CD8-positive, alpha-beta T cell (primary cell): ENCODE measurements at regions of chr11 and their contacts with region 1.

Region 1: DNA sequence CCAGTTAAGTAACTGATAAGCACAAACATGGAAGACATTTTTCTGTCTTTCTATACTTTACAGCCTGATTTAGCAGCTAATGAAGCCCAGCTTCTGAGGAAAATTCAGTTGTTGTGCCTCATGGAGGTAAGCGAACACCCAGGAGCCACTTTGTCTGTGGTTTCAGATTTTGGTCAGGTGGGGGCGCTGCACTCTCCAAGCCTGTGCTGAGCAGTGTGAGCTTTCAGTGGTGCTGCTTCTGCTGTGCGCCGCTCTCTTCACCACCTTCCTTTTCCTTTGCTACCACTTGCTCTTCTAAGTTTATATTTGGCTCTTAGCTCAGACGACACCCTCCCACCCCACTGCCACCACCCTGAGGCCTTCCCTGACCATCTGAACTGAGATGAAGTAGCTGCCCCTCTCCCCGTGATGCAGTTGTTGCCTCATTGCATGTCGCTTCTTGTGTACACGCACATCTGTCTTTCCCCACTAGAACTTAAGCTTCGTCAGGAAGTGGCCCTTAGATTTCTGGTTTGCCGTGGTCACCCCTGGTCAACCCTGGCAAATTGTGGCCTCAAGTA is 14.0 kb downstream of the PSMD13 start:
- DNase-seq: peak; percentile 75 to 89 (median 85)
- ATAC-seq: peak; percentile 99
- H3K4me3 ChIP-seq: no peak overlapping the region
- H3K4me3 Mint-ChIP-seq: peak overlapping the region; percentile 31
- H3K27ac ChIP-seq: peak overlapping the region in 1 of 2 experiments; percentile 10
- H3K27ac Mint-ChIP-seq: peak overlapping the region; percentile 92
- H3K4me1 ChIP-seq: peaks cover 5% of the 10 kb centered on the region
- H3K4me1 Mint-ChIP-seq: peaks cover 15% of the 10 kb centered on the region
- H3K27me3 ChIP-seq: no peaks in the 10 kb centered on the region
- H3K27me3 Mint-ChIP-seq: no peaks in the 10 kb centered on the region
- CTCF ChIP-seq: peak; percentile 77

Region 2: GRCh38 chr11:269146-269890 is 18.5 kb after region 1 on chr11:
- CTCF ChIA-PET with region 1: interaction called, 117 read pairs
- POLR2A ChIA-PET with region 1: interaction called, 17 read pairs
- intact Hi-C with region 1: loop called (anchors 2 kb)
- DNase-seq: peak in 5 of 9 experiments; percentile 60 to 90 (median 77)
- ATAC-seq: peak; percentile 69
- H3K4me3 ChIP-seq: peak overlapping the region; percentile 38 to 60
- H3K4me3 Mint-ChIP-seq: peak overlapping the region; percentile 85
- H3K27ac ChIP-seq: peak overlapping the region; percentile 76 to 96
- H3K27ac Mint-ChIP-seq: peak overlapping the region; percentile 98
- H3K4me1 ChIP-seq: peaks cover 23% of the 10 kb centered on the region
- H3K4me1 Mint-ChIP-seq: peaks cover 30% of the 10 kb centered on the region
- H3K27me3 ChIP-seq: no peaks in the 10 kb centered on the region
- H3K27me3 Mint-ChIP-seq: no peaks in the 10 kb centered on the region
- CTCF ChIP-seq: no peak

Region 3: GRCh38 chr11:288328-289144 is 37.7 kb after region 1 on chr11 and contains the start of gene PGGHG:
- CTCF ChIA-PET with region 1: interaction called, 117 read pairs
- POLR2A ChIA-PET with region 1: interaction called, 54 read pairs
- intact Hi-C with region 1: loop called in 1 of 2 experiments (anchors 5 kb)
- DNase-seq: peak in 7 of 9 experiments; percentile 53 to 78 (median 69)
- ATAC-seq: peak; percentile 25
- H3K4me3 ChIP-seq: peak within 1 kb of the TSS; percentile 56 to 94
- H3K4me3 Mint-ChIP-seq: peak within 1 kb of the TSS; percentile 99
- H3K27ac ChIP-seq: peak within 1 kb of the TSS; percentile 66 to 83
- H3K27ac Mint-ChIP-seq: peak within 1 kb of the TSS; percentile 99
- H3K4me1 ChIP-seq: peaks cover 55% of the 10 kb centered on the region
- H3K4me1 Mint-ChIP-seq: peaks cover 58% of the 10 kb centered on the region
- H3K27me3 ChIP-seq: peaks cover 0 to under 1% of the 10 kb centered on the region in 2 experiments
- H3K27me3 Mint-ChIP-seq: no peaks in the 10 kb centered on the region
- CTCF ChIP-seq: no peak
- total RNA-seq, gene PGGHG: 902 to 919 TPM

Region 4: GRCh38 chr11:304915-305843 is 54.4 kb after region 1 on chr11:
- CTCF ChIA-PET with region 1: interaction called, 51 read pairs
- POLR2A ChIA-PET with region 1: interaction called, 4 read pairs
- intact Hi-C with region 1: loop called (anchors 2 kb)
- DNase-seq: peak in 6 of 9 experiments; percentile 55 to 84 (median 72)
- ATAC-seq: peak; percentile 30
- H3K4me3 ChIP-seq: no peak overlapping the region
- H3K4me3 Mint-ChIP-seq: peak overlapping the region; percentile 5
- H3K27ac ChIP-seq: peak overlapping the region in 1 of 2 experiments; percentile 40
- H3K27ac Mint-ChIP-seq: peak overlapping the region; percentile 43
- H3K4me1 ChIP-seq: peaks cover 59% of the 10 kb centered on the region
- H3K4me1 Mint-ChIP-seq: peaks cover 58% of the 10 kb centered on the region
- H3K27me3 ChIP-seq: no peaks in the 10 kb centered on the region
- H3K27me3 Mint-ChIP-seq: no peaks in the 10 kb centered on the region
- CTCF ChIP-seq: peak; percentile 75

Region 5: DNA sequence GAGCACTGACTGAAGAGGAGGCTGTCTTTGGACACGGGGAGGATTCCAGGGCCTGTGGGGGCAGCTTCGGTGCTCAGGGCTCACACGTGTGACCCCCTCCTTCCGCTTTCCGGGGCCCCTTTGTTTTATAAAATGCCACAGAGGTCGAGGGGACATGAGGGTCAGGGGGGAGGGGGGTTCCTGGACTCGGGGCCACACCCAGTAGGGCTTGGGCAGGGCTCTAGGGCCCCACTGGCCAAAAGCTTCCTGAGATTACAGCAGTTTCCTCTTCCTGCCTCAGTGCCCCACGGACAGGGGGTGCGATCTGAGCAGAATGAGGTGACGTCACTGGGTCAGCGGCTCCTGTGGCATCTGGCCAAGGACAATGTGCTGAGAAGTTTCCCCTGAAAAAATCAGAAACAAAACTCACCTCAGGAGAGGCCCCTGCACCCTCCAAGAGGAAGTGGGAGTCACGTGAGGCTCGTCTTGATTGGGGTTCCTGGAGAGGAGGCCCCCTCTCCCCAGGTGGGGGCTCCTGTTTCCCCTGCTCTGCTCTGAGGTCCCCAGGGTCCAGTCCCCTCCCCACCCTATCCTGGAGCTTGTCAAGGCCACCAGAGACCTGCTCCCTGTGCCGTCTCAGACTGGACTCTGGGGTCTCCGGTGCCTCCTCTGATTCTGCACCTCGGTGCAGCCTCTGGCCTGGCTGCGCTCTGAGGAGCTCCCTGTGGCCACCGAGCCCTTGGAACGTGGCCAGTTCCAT is 76.2 kb after region 1 on chr11:
- CTCF ChIA-PET with region 1: interaction called, 11 read pairs
- POLR2A ChIA-PET with region 1: interaction called, 3 read pairs
- intact Hi-C with region 1: no loop called
- DNase-seq: peak in 8 of 9 experiments; percentile 42 to 93 (median 77)
- ATAC-seq: peak; percentile 62
- H3K4me3 ChIP-seq: peak overlapping the region; percentile 6 to 9
- H3K4me3 Mint-ChIP-seq: peak overlapping the region; percentile 67
- H3K27ac ChIP-seq: peak overlapping the region; percentile 69 to 81
- H3K27ac Mint-ChIP-seq: peak overlapping the region; percentile 95
- H3K4me1 ChIP-seq: peaks cover 85% of the 10 kb centered on the region
- H3K4me1 Mint-ChIP-seq: peaks cover 76% of the 10 kb centered on the region
- H3K27me3 ChIP-seq: no peaks in the 10 kb centered on the region
- H3K27me3 Mint-ChIP-seq: no peaks in the 10 kb centered on the region
- CTCF ChIP-seq: no peak

Region 6: DNA sequence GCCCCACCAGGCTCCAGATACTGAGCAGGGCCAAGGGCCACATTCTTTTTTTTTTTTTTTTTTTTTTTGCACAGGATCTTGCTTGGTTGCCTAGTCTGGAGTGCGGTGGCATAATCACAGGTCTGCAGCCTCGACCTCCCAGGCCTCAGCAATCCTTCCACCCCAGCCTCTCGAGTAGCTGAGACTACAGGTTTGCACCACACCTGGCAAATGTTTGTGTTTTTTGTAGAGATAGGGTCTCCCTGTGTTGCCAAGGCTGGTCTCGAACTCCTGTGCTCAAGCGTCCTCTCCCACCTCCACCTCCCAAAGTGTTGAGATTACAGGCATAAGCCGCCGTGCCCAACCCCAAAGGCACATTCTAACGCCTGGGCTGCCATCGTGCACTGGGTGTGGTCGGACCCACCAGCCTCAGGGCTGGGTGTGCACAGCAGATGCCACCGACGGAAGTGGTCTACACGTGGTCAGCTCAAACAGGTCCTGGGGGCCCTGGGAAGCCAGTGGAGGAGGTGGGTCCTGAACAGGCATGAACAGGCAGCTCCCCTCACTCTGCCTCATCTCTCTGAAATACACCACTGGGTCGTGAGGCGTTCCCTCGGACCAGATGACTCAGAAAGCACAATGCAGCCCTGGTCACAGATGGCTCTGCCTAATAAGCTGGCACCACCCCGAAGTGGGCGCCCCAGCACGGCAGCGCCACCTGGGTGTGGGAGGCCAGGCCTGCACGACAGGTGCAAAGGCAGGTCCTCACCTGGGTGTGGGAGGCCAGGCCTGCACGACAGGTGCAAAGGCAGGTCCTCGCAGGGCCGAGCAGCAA is 113.3 kb after region 1 on chr11:
- CTCF ChIA-PET with region 1: interaction called, 108 read pairs
- POLR2A ChIA-PET with region 1: no interaction called
- intact Hi-C with region 1: loop called (anchors 1 kb)
- DNase-seq: peak; percentile 45 to 83 (median 67)
- ATAC-seq: peak; percentile 86
- H3K4me3 ChIP-seq: no peak overlapping the region
- H3K4me3 Mint-ChIP-seq: no peak overlapping the region
- H3K27ac ChIP-seq: peak overlapping the region in 1 of 2 experiments; percentile 21
- H3K27ac Mint-ChIP-seq: no peak overlapping the region
- H3K4me1 ChIP-seq: peaks cover 11% of the 10 kb centered on the region
- H3K4me1 Mint-ChIP-seq: peaks cover 21% of the 10 kb centered on the region
- H3K27me3 ChIP-seq: peaks cover 11 to 17% of the 10 kb centered on the region in 2 experiments
- H3K27me3 Mint-ChIP-seq: peaks cover 27% of the 10 kb centered on the region
- CTCF ChIP-seq: peak; percentile 49

Region 7: GRCh38 chr11:952406-953385 is 701.9 kb after region 1 on chr11:
- CTCF ChIA-PET with region 1: no interaction called
- POLR2A ChIA-PET with region 1: no interaction called
- intact Hi-C with region 1: no loop called
- DNase-seq: no peak
- ATAC-seq: no peak
- H3K4me3 ChIP-seq: no peak overlapping the region
- H3K4me3 Mint-ChIP-seq: no peak overlapping the region
- H3K27ac ChIP-seq: no peak overlapping the region
- H3K27ac Mint-ChIP-seq: no peak overlapping the region
- H3K4me1 ChIP-seq: peaks cover 11% of the 10 kb centered on the region
- H3K4me1 Mint-ChIP-seq: peaks cover 28% of the 10 kb centered on the region
- H3K27me3 ChIP-seq: no peaks in the 10 kb centered on the region
- H3K27me3 Mint-ChIP-seq: no peaks in the 10 kb centered on the region
- CTCF ChIP-seq: no peak